ENCODE measurements at regions of chr13 and their contacts with region 1.

Region 1: GRCh38 chr13:52665325-52665724 is 12.7 kb downstream of the SUGT1 start:
- DNase-seq: no peak
- H3K4me3 ChIP-seq: no peak overlapping the region
- H3K27ac ChIP-seq: peak overlapping the region in 1 of 59 donors; percentile 15
- H3K27me3 ChIP-seq: no peaks in the 10 kb centered on the region
- CTCF ChIP-seq: peak in 51 of 56 donors; percentile 21 to 73 (median 50)

Region 2: GRCh38 chr13:52738719-52739467 is 73.6 kb after region 1 on chr13:
- intact Hi-C with region 1: loop called in 1 of 2 experiments (anchors 5 kb)
- DNase-seq: peak in 6 of 10 donors; percentile 20 to 64 (median 51)
- H3K4me3 ChIP-seq: peak overlapping the region; percentile 33 to 80 (median 64)
- H3K27ac ChIP-seq: peak overlapping the region in 7 of 59 donors; percentile 2 to 64 (median 29)
- H3K27me3 ChIP-seq: peaks cover 0 to 40% (median 11%) of the 10 kb centered on the region in 45 donors
- CTCF ChIP-seq: peak in 52 of 56 donors; percentile 32 to 88 (median 64)

Region 3: GRCh38 chr13:52850396-52851136 is 185.2 kb after region 1 on chr13:
- intact Hi-C with region 1: no loop called
- DNase-seq: peak in 6 of 10 donors; percentile 42 to 79 (median 52)
- H3K4me3 ChIP-seq: peak overlapping the region; percentile 50 to 87 (median 66)
- H3K27ac ChIP-seq: peak overlapping the region in 53 of 59 donors; percentile 15 to 87 (median 68)
- H3K27me3 ChIP-seq: peaks cover 0 to 69% (median 45%) of the 10 kb centered on the region in 45 donors
- CTCF ChIP-seq: peak in 44 of 56 donors; percentile 11 to 49 (median 28)

Region 4: GRCh38 chr13:53038993-53039392 is 373.7 kb after region 1 on chr13:
- intact Hi-C with region 1: no loop called
- DNase-seq: peak in 2 of 10 donors; percentile 45 to 48
- H3K4me3 ChIP-seq: no peak overlapping the region
- H3K27ac ChIP-seq: peak overlapping the region in 30 of 59 donors; percentile 5 to 83 (median 67)
- H3K27me3 ChIP-seq: no peaks in the 10 kb centered on the region
- CTCF ChIP-seq: no peak

Measured in dorsolateral prefrontal cortex (tissue), 120 donors.